Mammary epithelial cell (primary cell): ENCODE measurements at regions of chr12 and their contacts with region 1.

Region 1: DNA sequence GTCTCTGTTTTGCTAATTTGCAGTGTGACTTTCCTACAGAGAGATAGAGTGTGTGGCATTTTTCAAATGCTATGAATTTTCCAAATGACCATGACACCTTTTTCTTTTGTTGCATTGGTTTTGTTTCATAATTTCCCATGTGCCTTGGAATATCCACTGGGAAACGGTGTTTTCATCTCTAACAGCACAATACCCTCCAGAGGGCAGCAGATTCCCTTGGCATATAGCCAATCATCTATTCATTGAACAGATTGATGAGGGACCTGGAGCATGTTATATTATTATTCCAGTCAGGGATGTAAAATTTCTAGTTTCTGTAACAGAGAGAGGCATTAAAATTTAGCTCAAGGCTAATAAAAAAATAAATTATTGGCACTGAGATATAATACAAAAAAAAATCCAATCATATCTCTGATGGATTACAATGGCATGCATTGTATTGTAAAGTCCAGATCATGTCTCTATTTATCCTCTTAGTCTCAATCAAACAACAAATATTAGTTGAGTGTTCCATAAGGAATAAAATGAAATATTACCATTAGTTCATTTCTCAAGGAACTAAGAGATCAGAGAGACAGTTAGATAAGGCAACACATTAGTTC is 29.6 kb upstream of the NTN4 start:
- DNase-seq: peak; percentile 41
- H3K4me3 ChIP-seq: no peak overlapping the region
- H3K27ac ChIP-seq: no peak overlapping the region
- H3K4me1 ChIP-seq: no peaks in the 10 kb centered on the region
- H3K27me3 ChIP-seq: peaks cover 3% of the 10 kb centered on the region
- CTCF ChIP-seq: peak; percentile 53 to 72

Region 2: DNA sequence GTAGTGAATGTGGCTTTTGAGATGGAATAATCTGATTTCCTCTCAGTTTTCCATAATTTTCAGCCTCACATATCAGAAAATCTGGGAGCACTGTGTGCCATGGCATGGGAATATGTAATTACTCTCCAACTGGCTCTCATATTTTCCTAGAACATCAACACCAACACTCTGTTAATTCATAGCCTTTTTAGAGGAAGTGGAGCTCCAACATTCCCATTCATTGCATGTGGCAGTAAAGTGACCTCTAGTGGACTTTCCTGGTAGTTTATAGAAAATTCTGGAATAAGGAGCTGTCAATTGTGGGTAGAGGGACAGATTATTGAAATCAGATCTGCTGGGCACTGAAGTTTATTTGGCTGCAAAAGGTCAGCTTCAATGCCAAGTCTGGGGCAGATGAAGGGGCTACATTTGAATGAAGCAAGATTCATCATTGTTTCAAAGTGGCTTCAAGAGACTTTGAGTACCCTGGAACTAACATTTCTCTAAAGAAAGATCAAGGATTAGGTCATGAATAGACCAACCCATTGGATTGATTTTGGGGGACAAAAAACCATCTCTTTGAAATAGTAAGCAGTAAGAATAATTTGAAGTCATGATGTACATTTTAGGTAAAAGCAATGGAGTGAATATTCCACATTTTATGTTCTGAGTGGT is 245.3 kb before region 1 on chr12:
- CTCF ChIA-PET with region 1: no interaction called
- dilution Hi-C with region 1: no loop called
- in situ Hi-C with region 1: loop called in 1 of 2 experiments (anchors 25 kb)
- intact Hi-C with region 1: no loop called
- DNase-seq: peak; percentile 34
- H3K4me3 ChIP-seq: no peak overlapping the region
- H3K27ac ChIP-seq: no peak overlapping the region
- H3K4me1 ChIP-seq: no peaks in the 10 kb centered on the region
- H3K27me3 ChIP-seq: no peaks in the 10 kb centered on the region
- CTCF ChIP-seq: peak; percentile 64 to 77

Region 3: GRCh38 chr12:95623585-95624042 is 196.6 kb before region 1 on chr12:
- CTCF ChIA-PET with region 1: no interaction called
- dilution Hi-C with region 1: loop called (anchors 25 kb)
- in situ Hi-C with region 1: no loop called
- intact Hi-C with region 1: loop called (anchors 1 kb)
- DNase-seq: peak; percentile 68
- H3K4me3 ChIP-seq: no peak overlapping the region
- H3K27ac ChIP-seq: no peak overlapping the region
- H3K4me1 ChIP-seq: peaks cover 11% of the 10 kb centered on the region
- H3K27me3 ChIP-seq: no peaks in the 10 kb centered on the region
- CTCF ChIP-seq: peak; percentile 66 to 87

Region 4: DNA sequence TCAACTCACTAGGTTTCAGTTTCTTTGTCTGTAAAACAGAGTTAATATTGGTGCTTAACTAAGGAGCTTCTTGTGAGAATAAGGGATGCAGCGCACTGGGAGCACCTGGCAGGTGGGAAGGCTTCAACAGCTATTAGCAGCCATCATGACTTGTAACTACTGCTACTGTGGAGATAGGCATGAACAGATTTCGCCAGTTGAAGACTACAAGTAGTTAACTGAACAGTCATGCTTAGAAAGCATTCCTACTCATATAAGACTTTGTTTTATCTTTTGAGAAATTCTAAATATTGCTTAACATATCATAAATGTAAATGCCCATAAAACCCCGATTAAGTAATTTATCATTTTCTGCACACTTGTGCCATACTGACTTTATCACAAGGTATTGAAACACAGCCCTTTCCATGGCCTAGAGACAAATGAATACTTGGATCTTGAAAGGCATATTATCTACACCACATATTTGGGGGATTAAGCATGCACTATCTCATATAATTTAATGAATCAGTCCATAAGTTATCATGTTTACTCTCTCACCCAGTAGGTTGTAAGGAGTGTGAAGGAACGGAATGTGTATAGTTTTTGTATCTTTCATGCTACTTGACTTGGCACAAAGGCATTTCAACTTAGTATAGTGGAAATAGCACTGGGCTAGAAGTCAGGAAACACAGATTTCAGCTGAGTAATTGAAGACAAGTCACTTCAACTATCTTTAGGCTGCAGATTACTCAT is 45.7 kb before region 1 on chr12:
- CTCF ChIA-PET with region 1: no interaction called
- dilution Hi-C with region 1: no loop called
- in situ Hi-C with region 1: no loop called
- intact Hi-C with region 1: no loop called
- DNase-seq: peak; percentile 42
- H3K4me3 ChIP-seq: no peak overlapping the region
- H3K27ac ChIP-seq: no peak overlapping the region
- H3K4me1 ChIP-seq: no peaks in the 10 kb centered on the region
- H3K27me3 ChIP-seq: no peaks in the 10 kb centered on the region
- CTCF ChIP-seq: no peak

Region 5: GRCh38 chr12:95790033-95790911 is 29.9 kb before region 1 on chr12 and contains the start of gene NTN4:
- CTCF ChIA-PET with region 1: no interaction called
- dilution Hi-C with region 1: no loop called
- in situ Hi-C with region 1: no loop called
- intact Hi-C with region 1: loop called (anchors 1 kb)
- DNase-seq: peak; percentile 54
- H3K4me3 ChIP-seq: peak within 1 kb of the TSS; percentile 73 to 79 (median 78)
- H3K27ac ChIP-seq: peak within 1 kb of the TSS; percentile 58
- H3K4me1 ChIP-seq: peaks cover 29% of the 10 kb centered on the region
- H3K27me3 ChIP-seq: no peaks in the 10 kb centered on the region
- CTCF ChIP-seq: no peak
- total RNA-seq, gene NTN4: 38.6 to 47.2 TPM

Region 6: GRCh38 chr12:95959107-95959506 is 138.9 kb after region 1 on chr12:
- CTCF ChIA-PET with region 1: no interaction called
- dilution Hi-C with region 1: no loop called
- in situ Hi-C with region 1: no loop called
- intact Hi-C with region 1: loop called (anchors 10 kb)
- DNase-seq: peak; percentile 12
- H3K4me3 ChIP-seq: no peak overlapping the region
- H3K27ac ChIP-seq: no peak overlapping the region
- H3K4me1 ChIP-seq: no peaks in the 10 kb centered on the region
- H3K27me3 ChIP-seq: no peaks in the 10 kb centered on the region
- CTCF ChIP-seq: peak; percentile 15 to 29